Activated CD8-positive, alpha-beta T cell treated with anti-CD3 and anti-CD28 coated beads, Interleukin-2, amount 10 ng/mL, durations not matched to agents 7 days and 5 days (primary cell): ENCODE measurements at regions of chr6 and their contacts with region 1.

Region 1: GRCh38 chr6:89145787-89146646 is at the start of gene PM20D2:
- DNase-seq: peak; percentile 78
- ATAC-seq: peak; percentile 87
- H3K4me3 Mint-ChIP-seq: peak within 1 kb of the TSS; percentile 88
- H3K27ac Mint-ChIP-seq: peak within 1 kb of the TSS; percentile 96
- H3K4me1 Mint-ChIP-seq: peaks cover 38% of the 10 kb centered on the region
- H3K27me3 Mint-ChIP-seq: no peaks in the 10 kb centered on the region
- total RNA-seq, gene PM20D2: 22.5 to 24.5 TPM

Region 2: GRCh38 chr6:89352278-89353117 is 206.5 kb after region 1 on chr6 and contains the start of gene UBE2J1:
- CTCF ChIA-PET with region 1: interaction called, 3 read pairs
- POLR2A ChIA-PET with region 1: interaction called, 18 read pairs
- DNase-seq: peak; percentile 77
- ATAC-seq: peak; percentile 88
- H3K4me3 Mint-ChIP-seq: peak within 1 kb of the TSS; percentile 98
- H3K27ac Mint-ChIP-seq: peak within 1 kb of the TSS; percentile 91
- H3K4me1 Mint-ChIP-seq: peaks cover 77% of the 10 kb centered on the region
- H3K27me3 Mint-ChIP-seq: no peaks in the 10 kb centered on the region
- total RNA-seq, gene UBE2J1: 30.1 to 30.3 TPM